ENCODE measurements at regions of chr1 and their contacts with region 1.

Region 1: GRCh38 chr1:173429471-173430402 is 47.4 kb upstream of the PRDX6 start:
- DNase-seq: no peak
- ATAC-seq: peak; percentile 93
- H3K4me3 ChIP-seq: peak overlapping the region in 1 of 2 experiments; percentile 23; a peak in 2 of 4 replicates
- H3K27ac ChIP-seq: no peak overlapping the region; the same call in 1 of the 2 replicates
- H3K4me1 ChIP-seq: peaks cover 16% of the 10 kb centered on the region; the same call in 1 of the 2 replicates
- H3K27me3 ChIP-seq: no peaks in the 10 kb centered on the region
- CTCF ChIP-seq: peak; percentile 86

Region 2: DNA sequence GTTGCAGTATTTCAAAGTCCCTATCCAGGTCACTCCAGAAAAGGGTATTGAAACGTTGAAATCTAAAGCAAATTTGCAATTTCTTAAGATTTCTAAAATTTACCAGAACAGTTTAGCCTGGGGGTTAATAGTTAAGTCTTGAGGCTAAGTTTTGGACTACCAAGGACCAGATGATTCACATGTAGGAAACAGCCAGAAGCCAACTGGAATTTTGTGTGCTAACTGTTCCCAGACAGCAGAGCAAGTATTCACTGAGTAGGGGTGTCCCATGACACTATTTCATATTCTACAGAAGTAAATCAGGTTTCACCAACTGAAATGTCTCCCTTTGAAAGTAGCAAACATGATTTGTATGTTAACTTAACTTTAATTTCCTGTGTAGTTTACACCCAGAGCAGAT is 1020.8 kb before region 1 on chr1:
- CTCF ChIA-PET with region 1: interaction called, 10 read pairs
- POLR2A ChIA-PET with region 1: no interaction called
- in situ Hi-C with region 1: no loop called
- intact Hi-C with region 1: no loop called
- DNase-seq: no peak
- ATAC-seq: no peak
- H3K4me3 ChIP-seq: no peak overlapping the region
- H3K27ac ChIP-seq: no peak overlapping the region
- H3K4me1 ChIP-seq: no peaks in the 10 kb centered on the region
- H3K27me3 ChIP-seq: no peaks in the 10 kb centered on the region
- CTCF ChIP-seq: no peak

Region 3: GRCh38 chr1:173342736-173343135 is 87.0 kb before region 1 on chr1:
- CTCF ChIA-PET with region 1: no interaction called
- POLR2A ChIA-PET with region 1: no interaction called
- in situ Hi-C with region 1: no loop called
- intact Hi-C with region 1: no loop called
- DNase-seq: no peak
- ATAC-seq: no peak
- H3K4me3 ChIP-seq: no peak overlapping the region
- H3K27ac ChIP-seq: no peak overlapping the region
- H3K4me1 ChIP-seq: no peaks in the 10 kb centered on the region
- H3K27me3 ChIP-seq: no peaks in the 10 kb centered on the region
- CTCF ChIP-seq: no peak

Region 4: GRCh38 chr1:173476664-173477285 is 47.0 kb after region 1 on chr1:
- CTCF ChIA-PET with region 1: interaction called, 4 read pairs
- POLR2A ChIA-PET with region 1: no interaction called
- in situ Hi-C with region 1: no loop called
- intact Hi-C with region 1: loop called (anchors 2 kb)
- DNase-seq: no peak
- ATAC-seq: peak; percentile 95
- H3K4me3 ChIP-seq: peak overlapping the region; percentile 80 to 95
- H3K27ac ChIP-seq: peak overlapping the region; percentile 85
- H3K4me1 ChIP-seq: peaks cover 36% of the 10 kb centered on the region
- H3K27me3 ChIP-seq: no peaks in the 10 kb centered on the region
- CTCF ChIP-seq: no peak

Region 5: DNA sequence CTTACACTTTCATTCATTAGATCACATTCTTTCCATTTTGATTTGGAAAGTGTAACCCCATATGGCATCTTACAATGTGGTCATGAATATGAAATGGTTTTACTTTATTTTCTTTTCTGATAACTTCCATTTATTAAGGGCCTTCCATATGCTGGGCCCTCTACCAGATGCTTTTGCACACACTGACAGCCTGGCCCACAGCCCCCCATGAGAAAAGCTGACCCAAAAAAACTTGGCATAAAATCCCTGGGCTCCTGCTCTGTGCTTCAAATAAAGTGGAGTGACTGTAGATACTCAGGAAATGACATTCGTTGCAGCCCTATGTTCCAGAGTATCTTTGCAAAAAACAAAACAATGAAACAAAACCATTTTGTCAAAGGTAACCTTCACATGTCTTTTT is 96.2 kb after region 1 on chr1:
- CTCF ChIA-PET with region 1: no interaction called
- POLR2A ChIA-PET with region 1: no interaction called
- in situ Hi-C with region 1: no loop called
- intact Hi-C with region 1: no loop called
- DNase-seq: no peak
- ATAC-seq: no peak
- H3K4me3 ChIP-seq: no peak overlapping the region
- H3K27ac ChIP-seq: no peak overlapping the region
- H3K4me1 ChIP-seq: no peaks in the 10 kb centered on the region
- H3K27me3 ChIP-seq: no peaks in the 10 kb centered on the region; the same call in 1 of the 2 replicates
- CTCF ChIP-seq: no peak

Region 6: DNA sequence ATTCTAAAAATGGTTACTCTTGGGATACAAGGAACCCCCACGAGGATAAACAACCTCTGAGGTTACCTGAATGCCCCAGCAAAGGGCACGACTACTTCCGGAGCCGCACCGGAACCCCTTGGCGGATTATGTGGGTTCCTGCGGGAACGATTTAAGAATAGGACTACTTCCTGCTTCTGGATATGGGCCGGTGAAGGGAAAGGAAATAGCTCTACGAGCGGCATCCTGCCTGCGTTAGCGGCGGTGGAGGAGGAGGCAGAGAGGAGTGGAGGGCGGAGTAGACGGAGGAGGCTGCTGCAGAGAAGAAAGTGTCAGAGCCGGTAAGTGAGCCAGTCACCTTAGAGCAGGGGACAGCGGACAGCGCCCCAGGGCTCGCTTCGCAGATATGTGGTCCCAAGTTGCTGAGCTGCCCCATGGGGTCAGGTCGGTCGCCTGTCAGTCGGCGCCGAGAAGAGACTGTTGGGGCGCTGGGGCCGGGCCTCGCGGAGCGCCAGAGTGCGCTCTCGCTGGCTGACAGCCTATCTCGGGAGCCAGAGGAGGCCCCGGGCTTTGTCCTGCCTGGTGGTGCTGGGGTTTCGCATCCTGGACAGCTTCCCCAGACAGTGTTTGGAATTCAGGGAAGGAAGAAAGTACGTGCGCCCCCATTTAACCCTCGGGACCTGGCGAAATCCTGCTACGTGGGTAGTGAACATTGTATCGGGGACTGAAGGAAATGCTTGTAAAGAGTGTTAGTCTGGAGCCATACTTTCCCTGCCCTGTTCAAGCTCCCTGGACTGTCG is 285.2 kb after region 1 on chr1 and contains the start of gene KLHL20:
- CTCF ChIA-PET with region 1: no interaction called
- POLR2A ChIA-PET with region 1: no interaction called
- in situ Hi-C with region 1: no loop called
- intact Hi-C with region 1: loop called (anchors 10 kb)
- DNase-seq: peak; percentile 74
- ATAC-seq: peak; percentile 99
- H3K4me3 ChIP-seq: peak within 1 kb of the TSS; percentile 83 to 95
- H3K27ac ChIP-seq: peak within 1 kb of the TSS; percentile 93
- H3K4me1 ChIP-seq: peaks cover 11% of the 10 kb centered on the region
- H3K27me3 ChIP-seq: peaks cover 4% of the 10 kb centered on the region; the same call in 1 of the 2 replicates
- CTCF ChIP-seq: no peak
- total RNA-seq, gene KLHL20: 11.4 TPM

Region 7: DNA sequence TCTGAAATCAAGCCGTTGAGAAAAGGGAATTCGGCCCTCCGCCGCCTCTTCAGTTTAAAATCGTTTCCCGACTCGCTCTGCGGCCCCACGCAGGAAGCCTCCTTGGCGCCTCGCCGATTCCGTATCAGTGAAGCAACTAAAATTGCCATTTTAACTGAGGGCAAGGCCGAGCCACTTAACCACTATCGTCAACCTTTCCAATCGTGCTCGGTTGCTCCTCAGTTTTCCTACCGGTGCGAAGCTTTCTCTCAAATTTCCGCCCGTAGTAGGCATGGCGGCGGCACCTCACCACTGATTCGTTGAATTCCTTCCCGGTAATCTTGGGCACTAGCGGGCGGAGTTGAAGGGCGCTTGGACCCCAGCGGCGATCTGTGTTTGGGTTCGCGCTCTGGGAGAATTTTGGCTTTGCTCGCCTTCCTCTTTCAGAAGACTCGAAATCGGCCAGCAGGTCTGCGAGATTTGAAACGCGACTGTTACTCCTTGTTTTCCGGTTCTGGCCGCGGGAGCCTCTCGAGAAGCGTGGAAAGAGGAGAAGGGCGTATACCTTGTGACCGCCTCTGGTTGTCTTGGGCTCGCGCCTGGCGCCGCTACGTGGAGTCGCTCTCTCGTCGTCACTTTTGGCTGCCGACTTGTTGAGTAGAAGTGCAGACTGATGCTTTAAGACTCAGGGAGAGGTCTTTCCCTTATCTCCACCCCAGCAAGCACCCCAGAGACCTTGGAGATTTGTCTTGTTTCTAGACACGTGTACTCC is 394.8 kb after region 1 on chr1 and contains the starts of genes CENPL and DARS2:
- CTCF ChIA-PET with region 1: interaction called, 4 read pairs
- POLR2A ChIA-PET with region 1: no interaction called
- in situ Hi-C with region 1: no loop called
- intact Hi-C with region 1: loop called (anchors 5 kb)
- DNase-seq: peak; percentile 91
- ATAC-seq: peak; percentile 94
- H3K4me3 ChIP-seq: peak within 1 kb of the TSS; percentile 99
- H3K27ac ChIP-seq: peak within 1 kb of the TSS; percentile 99
- H3K4me1 ChIP-seq: peaks cover 20% of the 10 kb centered on the region
- H3K27me3 ChIP-seq: no peaks in the 10 kb centered on the region
- CTCF ChIP-seq: no peak
- total RNA-seq, gene CENPL: 28.7 TPM
- total RNA-seq, gene DARS2: 28.8 TPM

Measured in Panc1 (cell line).